ENCODE measurements at regions of chr7 and their contacts with region 1.

Region 1: DNA sequence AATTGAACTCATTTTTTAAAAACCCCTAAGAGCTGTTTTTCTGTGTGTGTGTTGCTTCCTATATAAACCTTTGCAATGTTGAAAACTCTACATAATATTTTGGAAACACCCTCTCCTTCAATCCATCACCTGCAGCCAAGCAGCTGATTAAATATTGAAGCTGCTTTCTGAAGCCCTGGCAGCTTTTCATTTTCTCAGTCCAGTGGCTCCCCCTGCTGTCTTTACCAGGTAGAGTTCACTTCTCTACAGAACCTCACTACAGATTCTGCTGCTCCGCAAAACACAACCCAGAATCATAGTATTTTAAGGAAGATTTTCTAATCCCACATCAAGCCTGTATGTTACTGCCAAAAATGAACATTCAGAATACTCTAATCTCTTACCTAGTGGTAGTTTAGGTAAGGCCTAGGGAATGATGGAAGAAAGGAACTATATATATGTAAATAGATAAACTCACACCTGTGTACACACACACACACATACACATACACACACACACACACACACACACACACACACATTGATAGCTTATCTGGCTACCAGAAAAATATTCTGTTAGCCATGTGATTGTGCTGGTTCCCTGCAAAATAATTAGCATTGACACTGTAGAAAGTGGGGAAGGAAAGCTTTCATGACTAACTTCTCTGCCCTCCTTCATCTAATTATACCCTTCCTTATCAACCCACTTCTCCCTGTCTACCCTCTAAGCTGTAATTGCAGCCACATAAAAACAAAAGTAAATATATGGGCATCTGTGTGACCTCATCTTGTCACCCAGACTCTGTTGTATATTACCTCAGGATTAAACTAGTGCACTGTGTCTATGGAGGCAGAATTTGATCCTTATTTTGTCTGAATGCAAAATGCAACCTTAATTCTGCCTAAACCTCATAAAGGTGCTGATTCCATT is 229.5 kb upstream of the FZD1 start:
- DNase-seq: peak in 1 of 2 donors; percentile 42
- ATAC-seq: peak; percentile 85
- H3K4me3 ChIP-seq: no peak overlapping the region
- H3K27ac ChIP-seq: no peak overlapping the region
- H3K4me1 ChIP-seq: no peaks in the 10 kb centered on the region
- H3K27me3 ChIP-seq: no peaks in the 10 kb centered on the region

Region 2: DNA sequence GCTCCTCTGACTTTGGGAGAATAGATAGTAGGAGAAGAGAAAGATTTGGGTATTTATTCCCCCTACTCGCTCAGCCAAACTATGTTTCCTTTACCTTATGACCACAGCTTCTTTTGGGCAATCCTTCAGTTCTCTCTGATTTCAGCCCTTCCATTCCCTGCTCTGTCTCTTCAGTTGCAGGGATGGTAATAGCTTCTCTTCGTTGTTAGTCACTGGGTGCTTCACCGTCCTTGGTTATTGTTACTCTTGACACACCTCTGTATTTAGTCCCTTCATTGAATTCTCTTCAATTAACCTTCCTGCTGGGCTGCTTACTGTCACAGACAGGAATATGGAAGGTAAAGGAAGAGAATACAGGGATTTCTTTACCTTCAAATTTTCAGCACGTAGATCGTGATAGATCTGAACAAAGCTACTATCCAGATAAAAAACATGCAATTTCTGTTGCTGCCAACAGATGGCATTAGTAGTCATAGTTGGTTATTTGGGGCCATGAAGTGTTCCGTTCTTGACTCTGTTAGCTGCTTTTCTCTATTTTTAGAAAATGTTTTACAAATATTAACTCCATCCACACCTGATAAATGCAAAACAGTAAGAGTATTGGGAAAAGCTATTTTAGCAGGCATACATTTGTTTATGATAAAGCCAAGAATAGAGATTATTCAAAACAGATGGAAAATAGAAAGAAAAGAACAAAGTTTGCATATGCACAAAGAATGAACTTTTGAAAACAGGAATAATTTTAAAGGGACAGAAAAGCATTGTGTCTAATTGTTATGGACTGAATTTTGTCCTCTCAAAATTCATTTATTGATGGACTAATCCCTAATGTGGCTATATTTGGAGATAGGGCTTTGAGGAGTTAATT is 579.3 kb before region 1 on chr7:
- intact Hi-C with region 1: loop called (anchors 2 to 5 kb)
- DNase-seq: no peak
- ATAC-seq: peak; percentile 84
- H3K4me3 ChIP-seq: peak overlapping the region in 1 of 2 donors; percentile 18
- H3K27ac ChIP-seq: no peak overlapping the region
- H3K4me1 ChIP-seq: no peaks in the 10 kb centered on the region
- H3K27me3 ChIP-seq: no peaks in the 10 kb centered on the region

Region 3: GRCh38 chr7:90552521-90552920 is 482.2 kb before region 1 on chr7:
- intact Hi-C with region 1: loop called (anchors 10 kb)
- DNase-seq: no peak
- ATAC-seq: no peak
- H3K4me3 ChIP-seq: no peak overlapping the region
- H3K27ac ChIP-seq: no peak overlapping the region
- H3K4me1 ChIP-seq: no peaks in the 10 kb centered on the region
- H3K27me3 ChIP-seq: no peaks in the 10 kb centered on the region

Region 4: DNA sequence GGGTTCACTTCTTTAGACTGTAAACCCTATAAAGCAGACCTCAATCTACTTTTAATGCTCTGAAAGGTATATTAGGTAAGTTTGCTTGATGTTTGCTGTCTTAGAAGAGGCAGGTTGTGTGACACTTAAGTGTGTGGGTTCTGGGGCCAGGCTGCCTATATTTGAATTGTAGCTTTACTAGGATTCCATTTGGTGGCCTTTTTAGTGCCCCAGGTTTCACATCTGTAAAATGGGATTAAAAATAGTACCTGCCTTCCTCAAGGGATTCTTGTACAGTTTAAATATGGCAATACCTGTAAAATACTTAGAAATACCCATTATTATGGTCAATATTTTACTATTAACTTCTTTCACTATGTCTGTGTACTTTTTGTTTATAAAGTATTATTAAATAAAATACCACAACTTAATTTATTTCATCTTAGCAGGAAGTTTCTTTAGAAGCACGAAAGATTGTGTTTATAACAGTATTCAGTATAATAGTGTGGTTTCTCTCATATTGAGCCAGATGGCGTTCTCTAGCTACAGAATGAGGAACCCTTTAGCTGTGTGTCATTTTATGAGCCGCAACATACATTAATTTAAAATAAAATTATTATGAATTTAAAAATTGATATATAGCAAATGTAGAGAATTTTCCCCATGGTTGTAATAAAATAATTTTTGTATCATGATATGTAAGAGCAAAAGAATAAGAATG is 344.4 kb before region 1 on chr7:
- intact Hi-C with region 1: loop called in 1 of 2 experiments (anchors 10 kb)
- DNase-seq: no peak
- ATAC-seq: no peak
- H3K4me3 ChIP-seq: no peak overlapping the region
- H3K27ac ChIP-seq: no peak overlapping the region
- H3K4me1 ChIP-seq: no peaks in the 10 kb centered on the region
- H3K27me3 ChIP-seq: no peaks in the 10 kb centered on the region

Region 5: DNA sequence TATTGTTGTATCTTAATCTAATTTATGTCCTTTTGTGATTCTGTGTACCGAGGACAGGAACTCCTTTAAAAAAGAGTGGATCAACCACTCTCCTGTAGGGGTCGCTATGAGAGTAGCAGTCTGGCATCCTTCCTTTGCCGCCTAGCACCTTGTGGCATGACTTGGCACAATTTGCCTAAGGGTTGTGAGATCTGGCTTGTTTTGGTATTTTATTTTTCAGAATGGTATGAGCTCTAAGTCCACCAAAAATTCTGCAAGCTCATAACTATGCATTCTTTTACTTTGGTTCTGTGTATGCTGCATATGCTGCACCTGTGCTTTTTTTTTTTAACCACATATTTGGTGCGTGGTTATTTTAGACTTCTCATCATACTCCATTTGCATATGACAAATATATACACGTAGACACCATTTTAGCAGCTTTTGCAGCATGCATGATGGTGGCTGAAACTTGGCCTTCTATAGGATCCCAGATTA is 325.8 kb before region 1 on chr7:
- intact Hi-C with region 1: loop called in 1 of 2 experiments (anchors 10 kb)
- DNase-seq: no peak
- ATAC-seq: no peak
- H3K4me3 ChIP-seq: no peak overlapping the region
- H3K27ac ChIP-seq: no peak overlapping the region
- H3K4me1 ChIP-seq: peaks cover 0 to 14% of the 10 kb centered on the region in 2 donors
- H3K27me3 ChIP-seq: no peaks in the 10 kb centered on the region

Region 6: GRCh38 chr7:90726623-90727022 is 308.1 kb before region 1 on chr7:
- intact Hi-C with region 1: no loop called
- DNase-seq: no peak
- ATAC-seq: no peak
- H3K4me3 ChIP-seq: no peak overlapping the region
- H3K27ac ChIP-seq: no peak overlapping the region
- H3K4me1 ChIP-seq: no peaks in the 10 kb centered on the region
- H3K27me3 ChIP-seq: no peaks in the 10 kb centered on the region

Region 7: DNA sequence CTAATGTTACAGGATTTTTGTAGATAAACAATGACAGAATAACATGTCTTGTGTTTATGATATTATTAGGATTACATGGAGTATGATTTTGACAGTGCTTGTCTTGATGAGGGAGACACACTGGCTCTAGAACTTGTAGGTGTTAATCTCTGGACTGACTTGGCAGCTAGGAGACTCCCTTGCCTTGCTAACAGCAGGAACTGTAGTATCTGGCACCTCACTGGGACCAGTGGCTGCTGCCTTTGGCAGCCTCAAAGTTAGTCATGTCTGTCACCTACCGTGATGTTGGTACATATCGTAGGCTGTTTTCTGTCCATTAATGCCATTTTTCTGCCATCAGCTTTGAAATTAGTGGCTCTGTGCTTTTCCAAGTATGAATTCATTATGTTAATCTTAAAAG is 177.1 kb before region 1 on chr7:
- intact Hi-C with region 1: loop called in 1 of 2 experiments (anchors 10 kb)
- DNase-seq: no peak
- ATAC-seq: no peak
- H3K4me3 ChIP-seq: no peak overlapping the region
- H3K27ac ChIP-seq: no peak overlapping the region
- H3K4me1 ChIP-seq: no peaks in the 10 kb centered on the region
- H3K27me3 ChIP-seq: no peaks in the 10 kb centered on the region

Region 8: DNA sequence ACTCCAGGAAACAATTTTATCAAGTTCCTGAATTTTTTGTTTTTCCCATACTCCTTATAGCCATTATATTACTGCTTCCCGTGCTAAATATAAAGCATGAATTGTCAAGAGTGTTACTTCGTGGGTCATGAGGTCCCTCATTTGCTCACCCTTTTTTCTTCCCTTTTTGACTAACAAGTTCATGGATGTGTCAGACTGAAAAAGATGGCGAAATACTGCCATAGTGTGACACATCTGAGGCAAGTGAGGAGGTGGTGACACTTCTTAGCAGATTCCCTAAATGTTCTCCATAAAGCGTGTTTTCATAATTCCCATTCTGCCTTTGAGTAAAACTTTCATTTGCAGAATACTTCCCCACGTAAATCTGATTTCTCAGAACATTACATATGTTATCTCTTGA is 40.1 kb before region 1 on chr7:
- intact Hi-C with region 1: no loop called
- DNase-seq: no peak
- ATAC-seq: no peak
- H3K4me3 ChIP-seq: no peak overlapping the region
- H3K27ac ChIP-seq: no peak overlapping the region
- H3K4me1 ChIP-seq: no peaks in the 10 kb centered on the region
- H3K27me3 ChIP-seq: no peaks in the 10 kb centered on the region

Measured in aorta (tissue), 5 donors.